Sciatic nerve (tissue), 2 donors: ENCODE measurements at regions of chr18 and their contacts with region 1.

Region 1: DNA sequence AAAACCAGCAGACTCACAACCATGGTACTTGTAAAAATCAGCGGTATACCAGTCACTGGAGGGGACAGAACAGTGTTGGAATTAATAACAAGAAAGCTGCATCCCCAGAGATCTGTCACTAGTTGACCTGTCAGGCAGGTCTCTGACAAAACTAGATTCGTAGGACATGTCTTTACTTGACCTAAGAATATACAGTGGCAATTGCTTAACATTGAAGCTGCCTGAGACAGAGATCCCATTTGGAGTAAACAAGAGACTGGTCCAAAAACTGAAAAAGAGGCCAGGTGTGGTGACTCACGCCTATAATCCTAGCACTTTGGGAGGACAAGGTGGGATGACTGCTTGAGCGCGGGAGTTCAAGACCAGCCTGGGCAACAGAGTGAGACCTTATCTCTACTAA is 7.2 kb upstream of the SS18 start:
- DNase-seq: no peak
- ATAC-seq: no peak

Region 2: GRCh38 chr18:26233225-26233624 is 135.7 kb after region 1 on chr18:
- intact Hi-C with region 1: loop called (anchors 5 kb)
- DNase-seq: no peak
- ATAC-seq: no peak